Mammary epithelial cell (primary cell): ENCODE measurements at regions of chr3 and their contacts with region 1.

Region 1: GRCh38 chr3:99753268-99753975 is 64.2 kb upstream of the CMSS1 start:
- DNase-seq: peak; percentile 60
- H3K4me3 ChIP-seq: no peak overlapping the region
- H3K27ac ChIP-seq: no peak overlapping the region
- H3K4me1 ChIP-seq: peaks cover 24% of the 10 kb centered on the region
- H3K27me3 ChIP-seq: no peaks in the 10 kb centered on the region
- CTCF ChIP-seq: peak; percentile 78 to 87

Region 2: GRCh38 chr3:98817547-98818041 is 935.8 kb before region 1 on chr3:
- CTCF ChIA-PET with region 1: no interaction called
- dilution Hi-C with region 1: no loop called
- in situ Hi-C with region 1: no loop called
- intact Hi-C with region 1: loop called (anchors 10 kb)
- DNase-seq: no peak
- H3K4me3 ChIP-seq: no peak overlapping the region
- H3K27ac ChIP-seq: no peak overlapping the region
- H3K4me1 ChIP-seq: peaks cover 3% of the 10 kb centered on the region
- H3K27me3 ChIP-seq: no peaks in the 10 kb centered on the region
- CTCF ChIP-seq: peak; percentile 57 to 69

Region 3: DNA sequence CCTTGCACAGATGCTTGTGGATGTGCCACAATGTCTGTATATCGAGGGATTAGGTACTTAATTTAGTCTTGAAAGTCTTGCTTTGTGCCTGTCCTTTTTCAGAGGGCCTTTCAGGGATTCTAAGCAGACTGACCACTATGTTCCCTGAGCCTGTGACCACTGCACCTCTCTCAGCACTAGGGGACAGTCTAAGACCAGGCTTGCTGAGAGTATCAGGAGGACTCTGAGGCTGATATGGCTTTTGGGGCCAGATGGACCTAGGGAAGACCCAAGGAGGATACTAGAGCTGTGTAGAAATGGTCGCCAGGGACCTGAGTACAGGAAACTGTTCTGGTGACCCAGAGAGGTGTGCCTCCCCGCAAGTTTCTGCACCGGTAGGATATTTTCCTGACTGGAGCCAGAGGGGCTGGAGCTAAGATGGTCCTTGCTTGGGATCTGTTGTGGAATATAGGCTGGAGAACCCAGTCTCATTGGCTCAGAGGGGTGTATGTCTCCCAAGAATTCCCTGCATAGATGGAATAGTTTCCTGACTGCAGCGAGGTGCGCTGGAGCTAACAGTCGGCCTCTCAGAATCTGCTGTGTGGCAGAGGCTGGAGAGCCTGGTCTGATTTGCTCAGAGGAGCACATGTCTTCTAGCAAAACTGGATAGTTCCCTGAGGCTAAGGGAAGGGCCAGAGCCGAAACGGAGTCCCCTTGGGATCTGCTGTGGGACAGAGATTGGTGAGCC is 638.7 kb before region 1 on chr3:
- CTCF ChIA-PET with region 1: interaction called, 4 read pairs
- dilution Hi-C with region 1: no loop called
- in situ Hi-C with region 1: loop called in 1 of 2 experiments (anchors 10 kb)
- intact Hi-C with region 1: loop called (anchors 1 kb)
- DNase-seq: peak; percentile 60
- H3K4me3 ChIP-seq: no peak overlapping the region
- H3K27ac ChIP-seq: no peak overlapping the region
- H3K4me1 ChIP-seq: peaks cover 5% of the 10 kb centered on the region
- H3K27me3 ChIP-seq: no peaks in the 10 kb centered on the region
- CTCF ChIP-seq: peak; percentile 94 to 96

Region 4: GRCh38 chr3:99499235-99500158 is 253.9 kb before region 1 on chr3:
- CTCF ChIA-PET with region 1: no interaction called
- dilution Hi-C with region 1: no loop called
- in situ Hi-C with region 1: loop called in 1 of 2 experiments (anchors 25 kb)
- intact Hi-C with region 1: loop called (anchors 1 kb)
- DNase-seq: peak; percentile 28
- H3K4me3 ChIP-seq: no peak overlapping the region
- H3K27ac ChIP-seq: no peak overlapping the region
- H3K4me1 ChIP-seq: no peaks in the 10 kb centered on the region
- H3K27me3 ChIP-seq: no peaks in the 10 kb centered on the region
- CTCF ChIP-seq: peak; percentile 84 to 88

Region 5: GRCh38 chr3:99645277-99646106 is 107.9 kb before region 1 on chr3:
- CTCF ChIA-PET with region 1: interaction called, 3 read pairs
- dilution Hi-C with region 1: loop called (anchors 25 kb)
- in situ Hi-C with region 1: no loop called
- intact Hi-C with region 1: loop called (anchors 1 kb)
- DNase-seq: peak; percentile 43
- H3K4me3 ChIP-seq: no peak overlapping the region
- H3K27ac ChIP-seq: peak overlapping the region; percentile 59
- H3K4me1 ChIP-seq: peaks cover 30% of the 10 kb centered on the region
- H3K27me3 ChIP-seq: no peaks in the 10 kb centered on the region
- CTCF ChIP-seq: peak; percentile 64 to 86

Region 6: DNA sequence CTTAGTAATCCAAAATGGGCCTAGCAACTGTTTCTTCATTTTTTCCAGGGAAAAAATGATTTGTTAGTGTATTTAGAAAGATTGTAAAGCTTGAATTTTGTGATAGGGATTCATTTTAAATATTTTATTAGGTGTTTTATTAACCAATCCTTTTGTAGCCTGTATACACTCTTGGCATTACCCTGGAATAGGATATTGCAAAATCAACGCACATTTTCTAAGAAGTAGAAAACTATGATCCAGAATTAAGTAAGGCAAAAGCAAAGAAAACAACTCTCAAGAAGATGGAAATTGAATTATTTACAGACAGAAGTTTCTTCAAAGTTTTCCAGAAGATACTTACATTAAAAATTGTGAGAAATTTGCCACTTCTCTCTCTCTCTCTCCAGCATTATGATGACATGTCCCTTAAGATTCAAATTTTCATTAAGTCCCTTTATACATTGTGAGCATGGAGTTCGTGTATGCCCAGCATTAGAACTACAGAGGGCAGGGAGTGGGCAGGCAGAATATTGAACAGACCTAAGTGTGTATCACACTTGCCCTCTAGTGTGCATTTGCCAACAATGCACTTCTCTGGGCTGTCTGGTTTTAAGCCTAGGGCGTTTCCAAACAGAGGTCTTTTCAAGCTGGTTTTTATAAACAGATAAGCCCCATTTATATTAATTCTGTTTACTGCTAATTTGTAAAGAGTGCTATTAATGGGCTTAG is 35.7 kb after region 1 on chr3:
- CTCF ChIA-PET with region 1: no interaction called
- dilution Hi-C with region 1: no loop called
- in situ Hi-C with region 1: no loop called
- intact Hi-C with region 1: loop called (anchors 2 kb)
- DNase-seq: peak; percentile 44
- H3K4me3 ChIP-seq: no peak overlapping the region
- H3K27ac ChIP-seq: no peak overlapping the region
- H3K4me1 ChIP-seq: no peaks in the 10 kb centered on the region
- H3K27me3 ChIP-seq: no peaks in the 10 kb centered on the region
- CTCF ChIP-seq: peak; percentile 79 to 82